Posterior cingulate gyrus (tissue), 11 donors: ENCODE measurements at regions of chr6 and their contacts with region 1.

Region 1: DNA sequence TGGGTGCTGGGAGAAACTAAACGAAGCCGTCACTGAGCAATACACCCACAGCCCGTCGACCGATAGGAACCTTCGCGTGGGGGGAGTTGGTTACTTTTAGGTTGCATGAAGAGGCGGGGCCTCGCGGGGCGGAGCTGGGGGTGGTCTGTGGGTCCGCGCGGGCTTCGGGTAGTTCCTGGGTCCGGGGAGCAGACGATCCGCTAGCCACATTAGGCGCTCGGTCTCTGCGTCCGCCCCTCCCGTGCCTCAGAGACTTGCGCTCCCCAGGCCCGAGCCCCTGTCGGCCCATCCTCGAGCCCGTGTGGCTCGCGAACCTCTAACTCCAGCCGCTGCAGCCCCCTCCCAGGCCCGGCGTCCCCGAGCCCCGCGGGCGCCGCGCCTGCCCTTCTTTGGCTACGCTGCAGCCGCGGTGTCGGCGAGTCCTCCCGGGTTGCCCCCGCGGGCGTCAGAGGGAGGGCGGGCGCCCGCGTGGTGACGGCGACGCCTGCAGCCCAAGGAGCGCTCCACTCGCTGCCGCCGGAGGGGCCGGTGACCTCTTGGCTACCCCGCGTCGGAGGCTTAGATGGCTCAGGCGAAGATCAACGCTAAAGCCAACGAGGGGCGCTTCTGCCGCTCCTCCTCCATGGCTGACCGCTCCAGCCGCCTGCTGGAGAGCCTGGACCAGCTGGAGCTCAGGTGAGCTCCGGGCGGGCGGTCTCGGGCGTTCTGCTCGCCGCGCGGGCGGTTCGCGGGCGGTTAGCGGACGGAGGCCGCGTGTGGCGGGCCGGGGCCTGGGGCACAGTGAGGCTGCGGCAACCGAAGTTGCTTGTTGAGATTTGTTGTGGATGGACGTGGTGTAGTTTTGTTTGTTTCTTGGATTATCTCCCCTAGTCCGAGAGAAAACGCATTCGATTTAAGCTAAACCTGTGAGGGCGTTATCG is at the start of gene BAG2:
- DNase-seq: peak; percentile 58 to 97 (median 76)

Region 2: GRCh38 chr6:57089687-57090460 is 82.5 kb before region 1 on chr6 and contains the start of gene ZNF451:
- intact Hi-C with region 1: loop called (anchors 5 kb)
- DNase-seq: peak; percentile 97 to 100 (median 98)